ENCODE measurements at regions of chr14 and their contacts with region 1.

Region 1: GRCh38 chr14:61561657-61562276 is 133.5 kb upstream of the HIF1A start:
- DNase-seq: peak; percentile 94
- ATAC-seq: peak; percentile 77
- H3K4me3 ChIP-seq: peak overlapping the region; percentile 21 to 57 (median 29); a peak in 4 of 6 replicates
- H3K27ac ChIP-seq: peak overlapping the region; percentile 92
- H3K4me1 ChIP-seq: peaks cover 90% of the 10 kb centered on the region
- H3K27me3 ChIP-seq: no peaks in the 10 kb centered on the region
- CTCF ChIP-seq: peak; percentile 65
- EP300 ChIP-seq: peak in 1 of 2 experiments; percentile 92; a peak in 3 of 4 replicates
- POLR2A ChIP-seq: peak; percentile 76 to 78
- RAD21 ChIP-seq: peak; percentile 35; the same call in 1 of the 2 replicates

Region 2: GRCh38 chr14:60878536-60878935 is 683.2 kb before region 1 on chr14:
- CTCF ChIA-PET with region 1: no interaction called
- POLR2A ChIA-PET with region 1: no interaction called
- in situ Hi-C with region 1: no loop called
- intact Hi-C with region 1: no loop called
- DNase-seq: no peak
- ATAC-seq: no peak
- H3K4me3 ChIP-seq: no peak overlapping the region
- H3K27ac ChIP-seq: no peak overlapping the region
- H3K4me1 ChIP-seq: no peaks in the 10 kb centered on the region
- H3K27me3 ChIP-seq: no peaks in the 10 kb centered on the region
- CTCF ChIP-seq: no peak
- EP300 ChIP-seq: no peak
- POLR2A ChIP-seq: no peak
- RAD21 ChIP-seq: no peak

Region 3: GRCh38 chr14:61461808-61462275 is 99.9 kb before region 1 on chr14:
- CTCF ChIA-PET with region 1: no interaction called
- POLR2A ChIA-PET with region 1: interaction called, 3 read pairs
- in situ Hi-C with region 1: no loop called
- intact Hi-C with region 1: loop called (anchors 5 kb)
- DNase-seq: peak; percentile 68
- ATAC-seq: peak; percentile 79
- H3K4me3 ChIP-seq: no peak overlapping the region
- H3K27ac ChIP-seq: no peak overlapping the region
- H3K4me1 ChIP-seq: peaks cover 39% of the 10 kb centered on the region
- H3K27me3 ChIP-seq: no peaks in the 10 kb centered on the region; a peak in 1 of 5 replicates
- CTCF ChIP-seq: peak; percentile 79
- EP300 ChIP-seq: no peak
- POLR2A ChIP-seq: no peak
- RAD21 ChIP-seq: peak; percentile 81

Region 4: DNA sequence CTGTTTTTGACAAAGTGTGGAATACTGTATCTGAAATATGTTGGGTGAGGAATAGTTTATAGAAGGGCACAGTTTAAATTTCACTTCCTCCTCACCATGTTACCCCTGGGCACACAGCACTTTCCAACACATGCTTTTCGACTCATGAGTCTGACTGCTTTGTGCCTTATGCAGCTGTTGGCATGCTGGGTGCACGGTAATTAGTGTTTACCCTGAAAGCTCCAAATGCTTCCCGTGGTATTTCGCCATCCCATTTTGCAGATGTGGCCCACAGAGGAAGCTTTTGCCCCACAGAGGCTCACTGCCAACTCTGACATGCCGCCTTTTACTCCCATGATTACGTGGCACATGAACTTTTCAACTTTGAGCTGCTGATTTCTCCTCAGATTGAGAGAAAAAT is 71.8 kb before region 1 on chr14:
- CTCF ChIA-PET with region 1: no interaction called
- POLR2A ChIA-PET with region 1: interaction called, 18 read pairs
- in situ Hi-C with region 1: no loop called
- intact Hi-C with region 1: loop called (anchors 1 kb)
- DNase-seq: no peak
- ATAC-seq: no peak
- H3K4me3 ChIP-seq: no peak overlapping the region; a peak in 1 of 6 replicates
- H3K27ac ChIP-seq: no peak overlapping the region
- H3K4me1 ChIP-seq: peaks cover 52% of the 10 kb centered on the region
- H3K27me3 ChIP-seq: no peaks in the 10 kb centered on the region
- CTCF ChIP-seq: no peak
- EP300 ChIP-seq: no peak
- POLR2A ChIP-seq: no peak
- RAD21 ChIP-seq: no peak

Region 5: GRCh38 chr14:61537563-61538463 is 24.0 kb before region 1 on chr14:
- CTCF ChIA-PET with region 1: no interaction called
- POLR2A ChIA-PET with region 1: interaction called, 146 read pairs
- in situ Hi-C with region 1: no loop called
- intact Hi-C with region 1: loop called (anchors 1 kb)
- DNase-seq: peak; percentile 97
- ATAC-seq: peak; percentile 87
- H3K4me3 ChIP-seq: peak overlapping the region; percentile 2 to 44 (median 14); a peak in 3 of 6 replicates
- H3K27ac ChIP-seq: peak overlapping the region; percentile 91
- H3K4me1 ChIP-seq: peaks cover 66% of the 10 kb centered on the region
- H3K27me3 ChIP-seq: no peaks in the 10 kb centered on the region
- CTCF ChIP-seq: no peak
- EP300 ChIP-seq: peak; percentile 79 to 98; a peak in 3 of 4 replicates
- POLR2A ChIP-seq: peak in 1 of 2 experiments; percentile 54; a peak in 2 of 4 replicates
- RAD21 ChIP-seq: no peak

Region 6: DNA sequence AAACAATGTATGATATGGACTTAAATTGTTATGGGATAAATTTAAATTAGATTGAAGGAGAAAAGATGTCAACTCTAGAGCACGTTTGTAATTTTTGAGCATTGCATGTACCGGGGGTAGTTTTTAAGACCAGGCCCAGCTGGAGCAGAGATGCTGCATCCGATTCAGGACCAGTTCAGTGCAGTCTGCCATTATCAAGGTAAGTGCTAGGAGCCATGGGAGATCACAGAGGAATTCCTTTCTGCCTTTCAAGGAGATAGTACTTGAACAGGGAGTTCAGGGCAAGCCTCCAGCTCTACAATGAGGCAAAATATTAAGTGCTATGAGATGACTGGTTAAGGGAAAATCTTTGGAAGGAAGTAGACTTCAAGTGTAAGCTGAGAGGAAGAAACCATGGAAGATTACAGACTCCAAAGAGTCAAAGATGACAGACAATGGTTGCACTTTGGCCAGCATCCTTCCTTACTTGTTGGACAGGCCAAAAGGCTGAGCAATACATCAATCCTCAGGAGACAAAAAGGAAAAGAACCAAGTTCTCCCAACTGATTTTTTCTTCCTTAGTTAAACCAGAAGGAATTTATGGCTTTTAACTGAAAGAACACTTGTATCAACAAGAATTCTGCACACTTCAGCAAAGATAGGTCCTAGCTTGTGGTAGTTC is 20.3 kb after region 1 on chr14:
- CTCF ChIA-PET with region 1: no interaction called
- POLR2A ChIA-PET with region 1: interaction called, 14 read pairs
- in situ Hi-C with region 1: no loop called
- intact Hi-C with region 1: no loop called
- DNase-seq: no peak
- ATAC-seq: no peak
- H3K4me3 ChIP-seq: no peak overlapping the region
- H3K27ac ChIP-seq: no peak overlapping the region
- H3K4me1 ChIP-seq: peaks cover 41% of the 10 kb centered on the region
- H3K27me3 ChIP-seq: no peaks in the 10 kb centered on the region
- CTCF ChIP-seq: no peak
- EP300 ChIP-seq: no peak
- POLR2A ChIP-seq: no peak
- RAD21 ChIP-seq: no peak

Region 7: GRCh38 chr14:61609191-61609843 is 47.5 kb after region 1 on chr14:
- CTCF ChIA-PET with region 1: no interaction called
- POLR2A ChIA-PET with region 1: interaction called, 33 read pairs
- in situ Hi-C with region 1: no loop called
- intact Hi-C with region 1: loop called (anchors 2 kb)
- DNase-seq: peak; percentile 63
- ATAC-seq: peak; percentile 72
- H3K4me3 ChIP-seq: peak overlapping the region; percentile 29 to 59 (median 46)
- H3K27ac ChIP-seq: peak overlapping the region; percentile 43
- H3K4me1 ChIP-seq: peaks cover 39% of the 10 kb centered on the region
- H3K27me3 ChIP-seq: no peaks in the 10 kb centered on the region
- CTCF ChIP-seq: no peak
- EP300 ChIP-seq: no peak; a peak in 1 of 4 replicates
- POLR2A ChIP-seq: no peak
- RAD21 ChIP-seq: no peak

Region 8: GRCh38 chr14:61710853-61711817 is 149.4 kb after region 1 on chr14:
- CTCF ChIA-PET with region 1: no interaction called
- POLR2A ChIA-PET with region 1: interaction called, 5 read pairs
- in situ Hi-C with region 1: no loop called
- intact Hi-C with region 1: loop called (anchors 5 kb)
- DNase-seq: peak; percentile 32
- ATAC-seq: peak; percentile 11; the same call in 2 of the 3 replicates
- H3K4me3 ChIP-seq: no peak overlapping the region
- H3K27ac ChIP-seq: no peak overlapping the region
- H3K4me1 ChIP-seq: peaks cover 72% of the 10 kb centered on the region
- H3K27me3 ChIP-seq: no peaks in the 10 kb centered on the region
- CTCF ChIP-seq: no peak
- EP300 ChIP-seq: 0 out of 4 replicates have a peak, but pooled peaks of 1 of the 2 experiments have one; percentile 31
- POLR2A ChIP-seq: no peak
- RAD21 ChIP-seq: no peak

Measured in HepG2 (cell line).